ENCODE measurements at regions of chr1 and their contacts with region 1.

Region 1: DNA sequence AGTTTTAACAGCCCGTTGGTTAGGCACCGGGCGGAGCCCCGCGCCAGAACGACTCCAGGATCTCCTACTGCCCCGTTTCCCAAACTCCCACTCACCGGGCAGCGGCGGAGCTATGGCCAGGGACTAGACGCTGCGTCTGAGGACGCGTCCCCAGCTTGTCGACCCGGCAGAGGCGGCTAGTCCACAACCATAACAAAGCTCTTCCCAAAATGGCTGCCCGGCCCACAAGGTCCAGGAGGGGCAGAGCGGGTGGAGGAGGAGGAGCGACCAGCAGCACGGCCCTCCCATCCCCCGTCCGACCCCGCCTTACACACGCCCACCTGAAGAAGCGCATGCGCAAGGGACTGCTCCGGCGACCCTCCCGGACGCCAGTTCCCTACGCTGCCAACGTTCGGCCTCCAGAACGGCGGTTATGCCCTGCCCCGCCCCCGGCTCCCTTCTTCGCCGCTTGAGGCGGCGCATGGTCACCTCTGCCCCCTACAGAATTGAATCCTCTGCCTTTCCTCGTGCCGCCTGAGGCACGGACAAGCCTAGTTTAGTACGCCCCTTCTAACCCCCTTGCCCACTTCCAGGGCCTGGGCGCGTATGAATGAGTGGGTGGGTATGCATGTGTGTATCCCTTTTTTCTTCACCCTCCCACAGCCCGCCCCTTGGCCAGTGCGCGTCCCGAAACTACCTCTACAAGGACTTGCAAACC is at the start of gene GPBP1L1:
- DNase-seq: peak; percentile 99
- ATAC-seq: peak; percentile 73
- H3K4me3 Mint-ChIP-seq: peak within 1 kb of the TSS; percentile 87
- H3K27ac Mint-ChIP-seq: peak within 1 kb of the TSS; percentile 95
- H3K4me1 Mint-ChIP-seq: peaks cover 52% of the 10 kb centered on the region
- H3K27me3 Mint-ChIP-seq: no peaks in the 10 kb centered on the region
- total RNA-seq, gene GPBP1L1: 101 to 112 TPM

Region 2: GRCh38 chr1:44730741-44731512 is 955.5 kb before region 1 on chr1 and contains the start of gene RNU5D-1:
- CTCF ChIA-PET with region 1: no interaction called
- POLR2A ChIA-PET with region 1: no interaction called
- intact Hi-C with region 1: loop called in 1 of 2 experiments (anchors 2 kb)
- DNase-seq: peak; percentile 98
- ATAC-seq: peak; percentile 85
- H3K4me3 Mint-ChIP-seq: peak within 1 kb of the TSS; percentile 67
- H3K27ac Mint-ChIP-seq: peak within 1 kb of the TSS; percentile 100
- H3K4me1 Mint-ChIP-seq: peaks cover 45% of the 10 kb centered on the region
- H3K27me3 Mint-ChIP-seq: no peaks in the 10 kb centered on the region
- total RNA-seq, gene RNU5D-1: not detected

Region 3: DNA sequence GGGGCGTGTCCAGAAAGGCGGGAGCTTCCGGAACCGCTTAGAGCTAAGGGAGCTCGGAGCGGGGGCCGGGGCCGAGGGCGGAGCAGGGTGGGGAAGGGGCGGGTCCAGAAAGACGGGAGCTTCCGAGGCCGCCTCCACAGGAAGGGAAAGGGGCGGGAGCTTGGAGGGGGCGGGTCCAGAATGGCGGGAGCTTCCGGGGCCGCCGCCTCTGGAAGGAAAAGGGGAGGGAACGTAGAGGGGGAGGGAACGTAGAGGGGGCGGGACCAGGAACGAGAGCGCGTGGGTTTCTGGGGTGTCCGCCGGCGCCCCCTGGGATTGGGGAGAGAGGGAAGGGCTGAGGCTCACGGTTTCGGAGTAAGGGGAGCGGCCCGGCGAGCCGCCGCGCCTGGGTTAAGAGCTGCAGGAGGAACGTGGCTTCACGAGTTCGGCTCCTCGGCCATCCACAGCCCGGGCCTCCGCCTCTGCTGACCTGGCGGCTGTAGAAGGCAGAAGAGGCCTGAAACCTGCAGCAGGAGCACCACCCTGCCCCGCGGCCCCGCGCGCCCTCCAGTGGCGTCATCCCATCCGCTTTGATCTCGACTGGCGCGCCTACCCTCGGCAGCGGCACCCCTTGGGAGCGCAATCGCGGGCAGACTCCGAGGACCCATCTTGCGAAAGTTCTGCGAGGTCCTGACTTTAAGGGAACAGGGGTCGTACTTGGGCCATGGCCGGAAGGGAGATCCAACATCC is 382.7 kb before region 1 on chr1:
- CTCF ChIA-PET with region 1: no interaction called
- POLR2A ChIA-PET with region 1: no interaction called
- intact Hi-C with region 1: loop called in 1 of 2 experiments (anchors 1 kb)
- DNase-seq: peak; percentile 100
- ATAC-seq: peak; percentile 83
- H3K4me3 Mint-ChIP-seq: peak overlapping the region; percentile 84
- H3K27ac Mint-ChIP-seq: peak overlapping the region; percentile 95
- H3K4me1 Mint-ChIP-seq: peaks cover 44% of the 10 kb centered on the region
- H3K27me3 Mint-ChIP-seq: no peaks in the 10 kb centered on the region

Region 4: DNA sequence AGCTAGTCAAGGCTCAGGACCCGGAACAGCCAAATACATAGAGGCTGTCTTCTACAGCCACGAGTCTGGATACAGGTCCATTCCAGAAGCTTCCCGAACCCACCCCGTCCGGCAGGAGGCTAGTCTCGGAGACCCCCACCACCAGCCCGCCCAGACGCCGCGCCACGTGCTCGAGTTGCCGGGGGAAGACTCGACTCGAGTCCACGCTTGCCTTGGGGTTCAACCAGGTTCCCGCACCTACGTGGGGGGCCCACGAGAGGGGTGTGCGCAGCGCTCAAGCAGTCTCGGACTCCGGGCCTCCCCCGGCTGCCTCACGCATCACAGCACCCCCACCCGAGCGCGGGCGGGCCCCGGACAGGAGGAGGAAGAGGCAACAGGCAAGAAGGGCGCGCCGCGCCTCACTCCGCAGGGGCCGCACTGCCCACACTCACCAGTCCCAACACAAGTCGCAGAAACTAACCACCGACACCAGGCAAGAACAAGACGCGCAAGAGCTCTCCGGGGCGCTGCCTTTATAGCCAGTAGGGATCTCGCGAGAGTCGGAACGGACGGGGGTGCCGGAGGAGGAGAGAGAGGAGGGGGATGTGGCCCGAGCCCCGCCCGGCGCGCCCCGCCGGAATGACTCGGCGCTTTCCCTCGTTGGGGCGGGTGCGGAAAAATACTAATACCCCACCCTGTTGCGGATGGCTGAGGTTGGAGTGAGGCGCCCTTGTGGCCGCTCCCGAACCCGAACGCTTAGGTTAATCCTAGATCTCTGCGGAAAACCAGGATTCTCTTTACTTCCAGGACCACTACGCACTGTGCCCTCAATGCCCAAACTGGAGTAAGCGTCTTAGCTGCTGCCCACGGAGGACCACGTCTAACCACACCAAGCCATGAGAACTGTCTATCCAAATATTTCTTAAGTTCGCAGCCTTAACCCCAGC is 164.8 kb before region 1 on chr1 and contains the start of gene PRDX1:
- CTCF ChIA-PET with region 1: no interaction called
- POLR2A ChIA-PET with region 1: interaction called, 10 read pairs
- intact Hi-C with region 1: loop called (anchors 1 to 5 kb)
- DNase-seq: peak; percentile 98
- ATAC-seq: peak; percentile 89
- H3K4me3 Mint-ChIP-seq: peak within 1 kb of the TSS; percentile 96
- H3K27ac Mint-ChIP-seq: peak within 1 kb of the TSS; percentile 94
- H3K4me1 Mint-ChIP-seq: peaks cover 47% of the 10 kb centered on the region
- H3K27me3 Mint-ChIP-seq: peaks cover 4% of the 10 kb centered on the region
- total RNA-seq, gene PRDX1: 473 to 580 TPM

Region 5: GRCh38 chr1:45569962-45570581 is 116.4 kb before region 1 on chr1:
- CTCF ChIA-PET with region 1: no interaction called
- POLR2A ChIA-PET with region 1: no interaction called
- intact Hi-C with region 1: no loop called
- DNase-seq: peak; percentile 82
- ATAC-seq: peak; percentile 99
- H3K4me3 Mint-ChIP-seq: no peak overlapping the region
- H3K27ac Mint-ChIP-seq: no peak overlapping the region
- H3K4me1 Mint-ChIP-seq: no peaks in the 10 kb centered on the region
- H3K27me3 Mint-ChIP-seq: no peaks in the 10 kb centered on the region

Region 6: DNA sequence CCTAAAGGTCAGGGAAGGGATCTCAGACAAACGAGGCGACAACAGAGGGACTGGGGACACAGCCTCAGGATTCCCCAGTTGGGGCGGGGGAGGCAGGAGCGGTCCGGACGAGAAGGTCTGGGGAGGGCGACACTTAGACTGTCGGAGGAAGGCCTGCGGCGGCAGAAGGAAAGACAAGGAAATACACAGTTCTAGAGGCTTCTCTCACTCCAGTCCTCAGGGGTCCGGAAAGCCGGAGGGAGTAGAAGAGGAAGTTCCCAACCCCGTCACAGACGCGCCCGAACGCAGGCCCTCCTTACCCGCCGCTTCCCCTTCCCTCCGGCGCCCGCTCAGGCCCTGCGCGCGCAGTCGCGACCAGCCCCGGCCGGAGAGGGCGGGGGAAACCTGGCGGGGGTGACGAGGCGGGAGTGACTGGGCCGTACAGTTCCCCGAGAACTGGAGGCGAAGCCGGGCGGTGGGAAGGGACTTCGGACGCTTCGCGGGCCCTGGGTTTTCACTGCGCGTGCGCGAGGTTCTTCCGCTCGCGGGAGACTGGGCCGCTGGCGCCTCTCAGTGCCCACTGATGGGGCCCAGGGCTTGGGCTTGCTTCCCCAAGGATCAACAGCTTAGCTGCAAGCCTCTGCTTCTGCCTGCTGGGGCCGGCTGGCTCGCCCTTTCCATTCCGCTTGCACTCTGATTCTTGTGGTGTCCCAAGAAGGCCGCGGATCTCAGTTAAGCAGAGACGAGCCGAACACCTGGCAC is 64.0 kb after region 1 on chr1 and contains the start of gene IPP:
- CTCF ChIA-PET with region 1: no interaction called
- POLR2A ChIA-PET with region 1: interaction called, 4 read pairs
- intact Hi-C with region 1: loop called (anchors 1 kb)
- DNase-seq: peak; percentile 97
- ATAC-seq: peak; percentile 99
- H3K4me3 Mint-ChIP-seq: peak within 1 kb of the TSS; percentile 93
- H3K27ac Mint-ChIP-seq: peak within 1 kb of the TSS; percentile 95
- H3K4me1 Mint-ChIP-seq: peaks cover 27% of the 10 kb centered on the region
- H3K27me3 Mint-ChIP-seq: no peaks in the 10 kb centered on the region
- total RNA-seq, gene IPP: 11.6 to 21.8 TPM

Region 7: DNA sequence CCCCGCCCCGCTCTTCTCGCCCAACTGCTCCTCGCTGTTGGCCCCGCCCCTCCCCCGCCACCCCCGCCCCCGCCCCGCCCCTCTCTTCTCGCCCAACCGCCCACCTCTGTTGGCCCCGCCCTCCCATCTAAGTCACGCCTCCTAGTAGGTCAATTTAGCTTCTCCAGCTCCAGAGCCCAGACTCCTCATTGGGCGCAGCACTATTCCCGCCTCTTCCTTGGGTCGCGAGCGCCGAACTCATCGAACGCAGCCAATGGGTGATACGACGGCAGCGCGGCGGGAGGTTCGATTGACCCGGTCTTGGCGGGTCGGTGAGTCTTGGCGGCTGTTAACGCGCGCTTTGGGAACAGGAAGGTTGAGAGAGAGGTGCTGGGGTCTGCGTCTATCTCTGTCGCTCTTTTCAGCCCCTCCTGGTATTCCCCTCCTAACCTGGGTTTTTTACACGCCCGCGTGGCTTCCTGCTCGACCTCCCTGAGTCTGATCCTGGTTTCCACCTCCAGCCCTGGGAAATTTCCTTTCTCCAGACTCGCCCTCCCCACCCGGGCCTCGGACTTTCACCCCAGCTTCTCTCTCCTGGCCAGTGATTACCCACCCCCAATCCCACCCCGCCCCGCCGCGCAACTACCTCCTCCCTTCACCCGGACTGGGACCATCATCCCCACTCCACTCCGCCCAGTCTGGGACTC is 561.1 kb after region 1 on chr1 and contains the start of gene RAD54L:
- CTCF ChIA-PET with region 1: interaction called, 5 read pairs
- POLR2A ChIA-PET with region 1: interaction called, 15 read pairs
- intact Hi-C with region 1: loop called (anchors 1 kb)
- DNase-seq: peak; percentile 99
- ATAC-seq: peak; percentile 94
- H3K4me3 Mint-ChIP-seq: peak within 1 kb of the TSS; percentile 83
- H3K27ac Mint-ChIP-seq: peak within 1 kb of the TSS; percentile 92
- H3K4me1 Mint-ChIP-seq: peaks cover 20% of the 10 kb centered on the region
- H3K27me3 Mint-ChIP-seq: no peaks in the 10 kb centered on the region
- total RNA-seq, gene RAD54L: 64.2 to 73.4 TPM

Region 8: DNA sequence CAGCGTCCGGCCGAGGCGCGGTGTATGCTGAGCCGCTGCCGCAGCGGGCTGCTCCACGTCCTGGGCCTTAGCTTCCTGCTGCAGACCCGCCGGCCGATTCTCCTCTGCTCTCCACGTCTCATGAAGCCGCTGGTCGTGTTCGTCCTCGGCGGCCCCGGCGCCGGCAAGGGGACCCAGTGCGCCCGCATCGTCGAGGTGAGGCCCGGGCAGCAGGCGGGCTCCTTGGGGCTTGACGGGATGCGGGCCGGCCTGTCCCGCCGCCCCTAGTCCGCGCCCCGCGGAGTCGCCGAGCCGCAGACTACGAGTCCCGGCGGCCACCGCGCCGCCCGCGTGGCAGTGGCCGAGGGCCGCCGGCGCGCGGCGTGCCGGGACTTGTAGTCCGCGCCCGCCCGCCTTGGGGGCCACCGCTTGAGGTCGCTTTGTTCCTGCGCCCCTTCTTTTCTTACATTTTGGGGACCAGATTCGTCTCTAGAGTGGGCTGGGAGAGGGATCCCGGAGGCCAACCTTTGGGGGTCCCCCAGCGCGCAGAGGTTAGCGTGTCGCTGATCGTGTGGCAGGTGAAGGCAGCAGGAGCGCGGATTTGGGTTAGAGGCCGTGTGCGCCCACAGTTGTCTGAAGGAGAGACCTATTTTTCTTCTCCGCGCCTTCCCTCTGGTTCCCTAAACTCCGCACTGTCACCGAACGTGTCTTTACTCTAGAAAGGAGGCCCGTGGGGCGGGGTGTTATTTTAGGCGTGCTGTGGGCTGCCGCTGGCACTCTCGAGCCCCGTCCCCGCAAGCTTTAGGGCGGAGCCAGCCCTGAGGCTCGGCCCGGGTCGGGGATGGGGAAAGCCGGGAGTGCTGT is 1647.7 kb after region 1 on chr1:
- CTCF ChIA-PET with region 1: no interaction called
- POLR2A ChIA-PET with region 1: no interaction called
- intact Hi-C with region 1: loop called in 1 of 2 experiments (anchors 2 kb)
- DNase-seq: peak; percentile 85
- ATAC-seq: peak; percentile 90
- H3K4me3 Mint-ChIP-seq: no peak overlapping the region
- H3K27ac Mint-ChIP-seq: peak overlapping the region; percentile 88
- H3K4me1 Mint-ChIP-seq: peaks cover 23% of the 10 kb centered on the region
- H3K27me3 Mint-ChIP-seq: no peaks in the 10 kb centered on the region